GM10248 (cell line): ENCODE measurements at regions of chr9 and their contacts with region 1.

Region 1: DNA sequence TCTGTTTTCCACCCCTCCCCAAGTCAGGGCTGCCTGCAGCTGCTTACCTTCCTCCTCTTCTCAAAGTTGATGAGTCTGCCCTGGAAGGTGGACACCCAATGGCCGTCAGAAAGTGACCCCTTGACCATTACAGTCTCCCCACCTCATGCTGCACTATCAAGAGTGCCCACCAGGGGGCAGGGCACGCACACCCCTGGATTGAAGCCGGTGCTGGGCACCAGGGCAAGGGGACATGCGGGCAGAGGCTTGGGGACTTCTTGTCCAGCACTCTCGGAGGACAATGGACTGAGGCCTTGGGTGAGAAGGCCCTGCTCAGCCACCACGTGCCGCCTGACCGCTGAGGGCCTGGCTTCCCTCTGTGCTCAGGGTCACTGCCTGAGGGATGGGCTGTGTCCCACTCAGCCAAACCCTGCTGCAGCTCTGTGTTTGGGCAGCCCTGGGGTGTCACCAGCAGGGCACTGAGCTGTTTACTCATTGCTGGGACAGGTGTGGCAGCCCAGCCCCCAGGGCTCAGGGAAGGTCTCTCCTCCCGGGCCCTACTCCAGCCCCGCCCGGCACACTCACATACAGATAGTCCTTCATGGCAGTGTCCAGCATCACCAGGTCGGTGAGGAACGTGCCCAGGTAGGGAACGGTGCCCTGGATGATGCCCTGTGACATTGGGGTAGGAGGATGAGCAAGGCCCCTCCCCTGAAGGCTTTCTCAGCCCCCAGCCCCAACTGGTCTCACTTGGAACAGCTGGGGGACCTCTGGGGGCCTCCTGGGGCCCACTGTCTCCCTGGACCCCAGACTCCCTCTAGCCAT is 17.7 kb downstream of the RALGDS start:
- DNase-seq: peak; percentile 81
- CTCF ChIP-seq: peak; percentile 84

Region 2: GRCh38 chr9:133075925-133076630 is 27.3 kb before region 1 on chr9:
- CTCF ChIA-PET with region 1: interaction called, 12 read pairs
- POLR2A ChIA-PET with region 1: no interaction called
- DNase-seq: no peak
- CTCF ChIP-seq: no peak

Region 3: DNA sequence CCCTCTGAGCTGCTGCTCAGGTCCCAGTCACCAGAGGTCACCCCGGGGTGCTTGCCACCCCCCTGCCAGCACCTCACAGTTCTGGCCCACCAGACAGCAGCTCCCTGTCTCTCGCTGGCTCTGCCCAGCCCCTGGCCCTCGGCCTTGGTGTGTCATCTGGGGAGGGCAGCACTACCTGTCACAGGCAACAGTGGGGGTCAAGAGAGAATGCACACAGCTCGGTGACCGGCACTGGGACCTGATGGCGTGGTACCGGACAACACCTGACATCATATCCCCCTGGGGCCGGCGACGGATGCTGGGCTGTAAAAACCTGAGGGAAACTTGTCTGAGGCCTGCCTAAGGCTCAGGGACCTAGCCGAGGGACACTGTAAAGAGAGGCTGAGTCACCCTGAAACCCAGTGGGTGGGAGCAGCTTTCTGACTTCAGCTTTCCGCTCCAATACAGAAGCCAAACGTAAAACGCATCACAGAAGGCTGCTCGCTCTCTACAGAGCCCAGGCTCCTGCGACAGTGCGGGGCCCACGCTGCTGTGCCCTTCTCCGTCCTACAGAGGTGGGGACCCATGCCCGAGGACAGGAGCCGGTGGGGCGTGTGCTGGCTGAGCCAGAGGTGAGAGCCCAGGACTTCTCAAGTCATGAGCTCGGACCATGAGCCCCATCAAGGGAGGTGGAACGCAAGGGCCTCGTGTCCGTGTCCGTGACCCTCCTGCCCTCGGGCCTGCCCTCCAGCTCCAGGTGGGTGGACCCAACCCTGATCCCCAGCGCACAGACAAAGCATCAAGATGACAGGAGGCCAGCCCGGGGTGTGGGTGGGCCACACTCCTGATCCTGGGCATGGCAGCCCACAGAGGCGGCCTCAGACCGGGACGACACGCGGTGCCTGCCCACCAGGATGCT is 12.3 kb after region 1 on chr9:
- CTCF ChIA-PET with region 1: interaction called, 56 read pairs
- POLR2A ChIA-PET with region 1: interaction called, 3 read pairs
- DNase-seq: peak; percentile 92
- CTCF ChIP-seq: no peak

Region 4: DNA sequence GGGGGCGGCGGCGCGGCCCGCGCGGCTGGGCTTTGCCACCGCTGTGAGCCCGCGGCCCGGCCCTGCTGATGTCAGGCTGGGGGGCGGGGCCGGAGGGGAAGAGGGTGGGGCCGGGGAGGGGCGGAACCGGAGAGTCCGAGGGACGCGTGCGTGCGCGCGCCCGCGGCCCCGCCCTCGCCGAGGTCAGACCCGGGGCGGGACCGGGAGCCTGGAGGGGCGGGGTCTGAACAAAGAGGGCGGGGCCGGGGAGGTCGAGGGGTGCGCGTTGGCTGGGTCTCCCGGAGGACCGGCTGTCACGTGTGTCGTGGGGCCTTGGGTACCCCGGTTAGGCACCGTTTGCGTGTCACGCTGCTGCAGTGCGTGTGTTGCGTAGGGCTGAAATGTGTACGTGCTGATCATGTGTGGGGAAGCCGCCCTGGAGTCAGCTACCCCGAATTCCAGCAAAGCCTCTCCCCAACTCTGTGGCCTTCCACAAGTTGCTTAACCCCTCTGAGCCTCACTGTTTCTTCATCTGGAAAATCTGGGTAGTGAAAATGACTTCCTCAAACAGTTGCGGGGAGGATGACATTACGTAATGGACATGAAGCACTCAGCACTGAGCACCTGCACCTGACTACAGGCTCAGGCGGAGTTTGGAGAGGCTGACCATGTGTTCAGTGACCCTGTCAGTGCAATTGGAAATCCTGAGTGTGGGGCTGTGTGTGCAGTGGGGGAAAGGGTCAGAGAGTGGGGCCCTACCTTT is 18.0 kb after region 1 on chr9 and contains the start of gene RALGDS:
- CTCF ChIA-PET with region 1: interaction called, 56 read pairs
- POLR2A ChIA-PET with region 1: interaction called, 3 read pairs
- DNase-seq: peak; percentile 97
- CTCF ChIP-seq: no peak

Region 5: DNA sequence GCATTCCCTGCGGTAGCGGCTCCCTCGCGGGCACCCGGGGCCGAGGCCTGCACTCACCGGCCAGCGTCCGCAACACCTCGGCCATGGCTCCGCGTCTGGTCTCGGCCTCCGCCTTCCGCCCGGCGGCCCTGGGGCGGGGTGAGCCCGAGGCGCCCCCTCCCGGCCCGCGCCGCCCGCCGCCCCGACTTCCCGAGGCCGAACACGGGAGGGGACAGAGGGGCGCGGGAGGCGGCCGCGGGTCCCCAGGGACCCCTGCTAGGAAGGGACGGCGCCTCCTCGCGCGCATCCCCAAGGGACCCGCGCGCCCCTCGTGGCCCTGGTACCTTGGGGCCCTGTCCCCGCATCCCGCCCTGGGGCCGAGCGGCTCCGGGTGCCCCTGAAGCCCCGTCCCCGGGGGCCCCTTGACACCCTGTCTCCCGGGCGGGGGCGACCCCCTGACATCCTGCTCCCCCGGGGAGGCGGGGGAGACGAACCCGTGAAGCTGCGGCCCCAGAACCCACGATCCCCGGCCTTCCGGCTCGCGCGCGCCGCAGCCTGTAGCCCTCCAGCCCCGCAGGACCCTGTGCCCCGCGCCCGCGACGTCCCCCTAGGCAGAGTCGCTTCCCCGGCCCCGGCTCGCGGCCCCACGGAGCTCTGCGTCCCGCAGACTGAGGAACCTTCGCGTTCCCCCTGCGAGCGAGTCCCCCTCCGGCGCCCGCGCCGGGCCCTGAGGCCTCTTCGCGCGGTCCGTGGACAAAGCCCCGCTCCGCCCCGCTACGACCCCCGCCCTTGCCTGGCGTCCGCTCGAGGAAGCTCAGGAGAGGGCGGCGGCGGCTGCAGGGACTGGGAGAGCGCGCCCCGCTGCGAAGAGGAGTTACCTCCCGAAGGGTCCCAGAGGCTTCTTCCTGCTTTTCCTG is 172.0 kb after region 1 on chr9 and contains the start of gene ABO:
- CTCF ChIA-PET with region 1: no interaction called
- POLR2A ChIA-PET with region 1: no interaction called
- DNase-seq: peak; percentile 22
- CTCF ChIP-seq: no peak